Right ventricle myocardium inferior (tissue), 1 donor: ENCODE measurements at regions of chr4 and their contacts with region 1.

Region 1: GRCh38 chr4:152640058-152640833 is 39.6 kb downstream of the TMEM154 start:
- DNase-seq: no peak
- ATAC-seq: no peak

Region 2: DNA sequence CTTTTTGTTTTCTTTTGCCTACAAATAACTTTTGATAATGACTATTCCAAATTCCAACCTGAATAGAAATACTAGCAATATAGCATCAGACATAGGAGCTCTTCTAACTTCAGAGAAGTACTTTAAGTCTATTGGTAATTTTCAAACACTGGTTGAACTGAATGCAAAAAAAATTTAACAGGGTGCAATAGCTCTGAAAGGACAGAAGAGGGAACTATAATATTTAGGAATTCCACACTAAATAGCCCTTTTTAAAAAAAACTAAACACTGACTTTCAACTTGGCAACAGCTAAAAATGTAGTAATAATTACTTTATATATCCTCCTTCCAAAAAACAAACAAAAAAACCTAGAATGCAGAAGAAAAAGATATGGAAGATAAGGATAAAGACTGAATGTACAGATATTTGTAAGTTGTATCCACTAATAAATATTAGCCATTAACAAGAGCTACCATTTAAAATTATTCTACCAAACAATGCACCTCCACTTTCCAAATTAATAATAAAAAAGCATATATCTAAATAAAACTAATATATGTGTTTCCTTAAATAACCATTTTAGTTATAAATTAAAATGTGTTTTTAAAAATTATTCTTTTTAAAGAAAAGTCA is 185.7 kb before region 1 on chr4:
- intact Hi-C with region 1: loop called (anchors 5 kb)
- DNase-seq: no peak
- ATAC-seq: no peak

Region 3: GRCh38 chr4:152500800-152501434 is 139.3 kb before region 1 on chr4:
- intact Hi-C with region 1: loop called (anchors 1 kb)
- DNase-seq: no peak
- ATAC-seq: no peak

Region 4: GRCh38 chr4:152605641-152606335 is 34.5 kb before region 1 on chr4:
- intact Hi-C with region 1: no loop called
- DNase-seq: no peak
- ATAC-seq: peak; percentile 78

Region 5: GRCh38 chr4:152684007-152684406 is 43.8 kb after region 1 on chr4:
- intact Hi-C with region 1: loop called (anchors 2 kb)
- DNase-seq: no peak
- ATAC-seq: peak; percentile 83

Region 6: GRCh38 chr4:152735396-152735859 is 95.2 kb after region 1 on chr4:
- intact Hi-C with region 1: loop called (anchors 5 kb)
- DNase-seq: no peak
- ATAC-seq: no peak